A673 (cell line): ENCODE measurements at regions of chr1 and their contacts with region 1.

Region 1: DNA sequence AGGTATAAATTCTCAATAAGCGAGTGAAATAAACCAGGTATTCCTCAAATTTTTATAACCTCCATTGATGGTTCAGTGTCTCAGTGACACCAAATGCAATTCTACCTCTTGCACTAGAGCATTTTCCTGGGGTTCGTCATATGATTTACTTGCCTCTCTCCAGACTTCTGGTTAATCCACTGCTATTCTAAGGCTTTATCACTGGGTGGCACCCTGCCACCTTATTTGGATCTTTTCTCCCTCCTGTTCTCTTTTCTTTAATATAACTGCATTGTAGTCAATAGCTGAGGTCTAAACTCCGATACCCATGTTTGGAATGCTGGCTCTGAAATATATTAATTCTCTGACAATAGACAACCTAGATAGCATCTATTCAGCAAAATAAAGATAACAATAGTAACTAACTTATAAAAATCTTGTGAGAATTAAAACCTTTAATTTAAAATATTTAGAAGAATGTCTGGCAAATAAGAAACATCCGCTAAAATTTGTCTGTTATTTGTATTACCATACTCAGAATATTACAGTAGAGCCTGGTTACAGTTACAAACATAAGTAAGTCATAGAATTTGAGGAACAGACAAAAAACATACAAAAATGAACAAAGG is 436.4 kb downstream of the PLA2G4A start:
- DNase-seq: peak; percentile 80
- H3K4me3 ChIP-seq: no peak overlapping the region
- H3K27ac ChIP-seq: no peak overlapping the region
- H3K4me1 ChIP-seq: no peaks in the 10 kb centered on the region
- H3K27me3 ChIP-seq: no peaks in the 10 kb centered on the region
- CTCF ChIP-seq: peak; percentile 77

Region 2: DNA sequence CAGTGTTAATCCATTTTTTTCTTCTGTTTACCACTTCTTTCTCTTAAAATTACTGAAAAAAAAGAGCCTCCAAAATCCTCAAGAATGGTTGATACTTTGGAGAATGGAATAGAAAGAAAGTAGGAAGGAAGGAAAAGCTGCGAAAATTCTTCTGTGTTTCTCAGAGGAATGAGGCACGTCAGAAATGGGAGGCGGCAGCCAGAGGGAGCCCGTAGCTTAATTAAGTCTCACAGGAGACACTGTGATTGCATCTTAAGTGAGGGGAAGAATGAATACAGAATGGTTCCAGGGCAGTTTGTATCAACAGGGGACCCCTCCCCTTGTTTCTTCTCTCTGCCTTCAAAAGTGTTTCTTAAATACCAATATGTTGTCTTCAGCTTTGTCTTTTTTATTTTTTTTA is 663.2 kb after region 1 on chr1:
- CTCF ChIA-PET with region 1: no interaction called
- POLR2A ChIA-PET with region 1: no interaction called
- intact Hi-C with region 1: loop called (anchors 10 kb)
- DNase-seq: peak; percentile 65
- H3K4me3 ChIP-seq: no peak overlapping the region
- H3K27ac ChIP-seq: no peak overlapping the region
- H3K4me1 ChIP-seq: peaks cover 3% of the 10 kb centered on the region
- H3K27me3 ChIP-seq: no peaks in the 10 kb centered on the region
- CTCF ChIP-seq: peak; percentile 69

Region 3: GRCh38 chr1:187999973-188000372 is 734.9 kb after region 1 on chr1:
- CTCF ChIA-PET with region 1: no interaction called
- POLR2A ChIA-PET with region 1: no interaction called
- intact Hi-C with region 1: loop called (anchors 10 kb)
- DNase-seq: peak; percentile 10
- H3K4me3 ChIP-seq: no peak overlapping the region
- H3K27ac ChIP-seq: no peak overlapping the region
- H3K4me1 ChIP-seq: no peaks in the 10 kb centered on the region
- H3K27me3 ChIP-seq: no peaks in the 10 kb centered on the region
- CTCF ChIP-seq: peak; percentile 53

Region 4: DNA sequence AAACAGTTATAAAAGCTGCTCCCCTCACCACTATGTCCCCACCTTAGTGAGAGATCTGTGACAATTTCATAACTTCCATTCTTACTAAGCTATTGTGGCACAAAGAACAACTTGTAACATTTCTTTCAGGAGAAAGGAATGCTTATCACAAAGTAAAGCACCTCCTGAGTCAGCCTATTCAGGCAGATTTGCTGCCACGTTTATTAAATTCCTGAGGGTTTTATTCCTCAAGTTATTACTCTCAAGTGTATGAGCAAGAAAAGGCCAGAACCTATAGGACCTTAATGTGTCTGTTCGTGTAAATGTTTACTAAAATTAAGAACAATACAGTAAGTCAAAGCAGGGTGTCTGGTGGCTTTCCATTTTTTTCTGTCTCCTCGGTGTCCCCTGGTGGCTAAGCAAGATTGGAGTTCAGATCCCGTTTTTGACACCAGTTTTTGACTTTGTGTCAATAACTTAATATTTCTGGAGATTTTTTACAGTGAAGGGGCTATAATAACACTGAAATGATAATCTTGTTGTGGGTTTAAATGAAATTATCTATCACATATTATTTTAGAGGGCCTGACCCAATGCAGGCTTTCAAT is 1673.0 kb after region 1 on chr1:
- CTCF ChIA-PET with region 1: no interaction called
- POLR2A ChIA-PET with region 1: no interaction called
- intact Hi-C with region 1: loop called (anchors 10 kb)
- DNase-seq: peak; percentile 49
- H3K4me3 ChIP-seq: no peak overlapping the region
- H3K27ac ChIP-seq: no peak overlapping the region
- H3K4me1 ChIP-seq: no peaks in the 10 kb centered on the region
- H3K27me3 ChIP-seq: no peaks in the 10 kb centered on the region
- CTCF ChIP-seq: peak; percentile 67